ENCODE measurements at regions of chr3 and their contacts with region 1.

Region 1: GRCh38 chr3:52231502-52232293 is 6.3 kb upstream of the TLR9 start:
- DNase-seq: peak; percentile 79 to 97 (median 89)
- ATAC-seq: peak; percentile 87
- H3K4me3 ChIP-seq: no peak overlapping the region
- H3K4me3 Mint-ChIP-seq: peak overlapping the region; percentile 42
- H3K27ac ChIP-seq: peak overlapping the region in 1 of 2 experiments; percentile 17
- H3K27ac Mint-ChIP-seq: peak overlapping the region; percentile 90
- H3K4me1 ChIP-seq: peaks cover 61% of the 10 kb centered on the region
- H3K4me1 Mint-ChIP-seq: peaks cover 64% of the 10 kb centered on the region
- H3K27me3 ChIP-seq: no peaks in the 10 kb centered on the region
- H3K27me3 Mint-ChIP-seq: no peaks in the 10 kb centered on the region
- CTCF ChIP-seq: peak; percentile 92

Region 2: DNA sequence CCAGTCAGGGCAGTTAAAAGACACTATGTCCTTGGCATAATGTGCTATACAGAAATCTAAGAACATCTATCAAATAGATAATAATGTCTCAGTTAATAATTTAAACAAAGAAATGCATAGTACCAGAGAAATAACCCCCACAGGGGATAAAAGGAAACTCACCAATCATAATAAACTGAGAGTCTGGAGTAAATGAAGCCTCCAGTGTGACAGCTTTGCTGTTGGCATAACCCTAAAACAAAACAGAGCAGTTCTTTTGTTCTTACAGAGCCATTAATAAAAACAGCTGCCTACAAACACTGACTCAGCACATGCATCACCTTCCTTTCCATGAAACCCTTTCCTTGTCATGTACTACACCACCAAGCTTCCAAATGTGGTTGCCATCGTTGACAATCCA is 27.3 kb after region 1 on chr3:
- CTCF ChIA-PET with region 1: interaction called, 54 read pairs
- POLR2A ChIA-PET with region 1: interaction called, 160 read pairs
- intact Hi-C with region 1: no loop called
- DNase-seq: no peak
- ATAC-seq: no peak
- H3K4me3 ChIP-seq: no peak overlapping the region
- H3K4me3 Mint-ChIP-seq: no peak overlapping the region
- H3K27ac ChIP-seq: peak overlapping the region in 1 of 2 experiments; percentile 6
- H3K27ac Mint-ChIP-seq: peak overlapping the region; percentile 100
- H3K4me1 ChIP-seq: peaks cover 91% of the 10 kb centered on the region
- H3K4me1 Mint-ChIP-seq: peaks cover 94% of the 10 kb centered on the region
- H3K27me3 ChIP-seq: no peaks in the 10 kb centered on the region
- H3K27me3 Mint-ChIP-seq: no peaks in the 10 kb centered on the region
- CTCF ChIP-seq: no peak

Region 3: GRCh38 chr3:52278510-52279069 is 46.9 kb after region 1 on chr3 and contains the start of gene WDR82:
- CTCF ChIA-PET with region 1: interaction called, 622 read pairs
- POLR2A ChIA-PET with region 1: interaction called, 685 read pairs
- intact Hi-C with region 1: no loop called
- DNase-seq: peak; percentile 94 to 99 (median 98)
- ATAC-seq: peak; percentile 77
- H3K4me3 ChIP-seq: peak within 1 kb of the TSS; percentile 65 to 95
- H3K4me3 Mint-ChIP-seq: peak within 1 kb of the TSS; percentile 94
- H3K27ac ChIP-seq: peak within 1 kb of the TSS; percentile 79 to 93
- H3K27ac Mint-ChIP-seq: peak within 1 kb of the TSS; percentile 99
- H3K4me1 ChIP-seq: peaks cover 49% of the 10 kb centered on the region
- H3K4me1 Mint-ChIP-seq: peaks cover 72% of the 10 kb centered on the region
- H3K27me3 ChIP-seq: no peaks in the 10 kb centered on the region
- H3K27me3 Mint-ChIP-seq: no peaks in the 10 kb centered on the region
- CTCF ChIP-seq: peak; percentile 36
- total RNA-seq, gene WDR82: 115 to 117 TPM

Region 4: DNA sequence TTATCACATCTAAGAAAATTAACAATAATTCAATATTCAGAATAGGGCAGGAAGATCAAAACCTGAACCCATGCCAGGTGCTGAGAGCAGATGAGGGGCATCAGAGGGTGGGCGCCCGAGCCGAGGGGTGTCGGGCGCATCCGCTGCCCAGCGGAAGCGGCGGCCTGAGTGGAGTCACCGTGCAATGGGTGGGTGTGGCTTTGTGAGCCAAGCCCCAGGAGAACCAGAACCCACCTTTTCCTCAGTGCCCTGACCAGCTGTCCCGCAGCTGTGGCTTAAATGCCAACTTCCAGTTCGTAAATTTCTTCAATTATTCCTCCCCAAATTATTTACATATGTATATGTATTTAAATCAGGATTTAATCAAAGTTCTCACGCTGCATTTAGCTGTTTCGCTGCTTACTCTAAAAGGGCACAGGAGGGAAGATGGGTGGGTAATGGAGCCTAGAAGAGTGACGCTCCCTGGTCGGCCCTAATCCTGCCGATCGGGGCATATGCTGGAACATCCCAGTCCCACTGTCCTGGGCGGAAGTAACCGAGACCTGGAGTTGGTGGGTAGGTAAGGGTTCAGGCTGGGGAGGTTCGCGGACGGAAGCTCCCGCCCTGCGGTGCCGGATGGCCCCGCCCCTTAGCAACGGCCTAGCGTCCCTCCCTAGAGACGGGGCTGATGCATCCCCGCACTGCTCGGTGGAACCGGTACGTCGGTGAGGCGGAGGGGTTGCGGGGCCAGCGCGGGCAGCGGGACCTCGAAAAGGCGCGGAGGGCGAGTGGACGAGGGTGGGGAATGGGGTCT is 85.7 kb after region 1 on chr3:
- CTCF ChIA-PET with region 1: interaction called, 16 read pairs
- POLR2A ChIA-PET with region 1: no interaction called
- intact Hi-C with region 1: no loop called
- DNase-seq: peak; percentile 48 to 84 (median 73)
- ATAC-seq: peak; percentile 100
- H3K4me3 ChIP-seq: peak overlapping the region; percentile 36 to 59
- H3K4me3 Mint-ChIP-seq: peak overlapping the region; percentile 69
- H3K27ac ChIP-seq: no peak overlapping the region
- H3K27ac Mint-ChIP-seq: no peak overlapping the region
- H3K4me1 ChIP-seq: peaks cover 12% of the 10 kb centered on the region
- H3K4me1 Mint-ChIP-seq: peaks cover 11% of the 10 kb centered on the region
- H3K27me3 ChIP-seq: no peaks in the 10 kb centered on the region
- H3K27me3 Mint-ChIP-seq: no peaks in the 10 kb centered on the region
- CTCF ChIP-seq: no peak

Region 5: DNA sequence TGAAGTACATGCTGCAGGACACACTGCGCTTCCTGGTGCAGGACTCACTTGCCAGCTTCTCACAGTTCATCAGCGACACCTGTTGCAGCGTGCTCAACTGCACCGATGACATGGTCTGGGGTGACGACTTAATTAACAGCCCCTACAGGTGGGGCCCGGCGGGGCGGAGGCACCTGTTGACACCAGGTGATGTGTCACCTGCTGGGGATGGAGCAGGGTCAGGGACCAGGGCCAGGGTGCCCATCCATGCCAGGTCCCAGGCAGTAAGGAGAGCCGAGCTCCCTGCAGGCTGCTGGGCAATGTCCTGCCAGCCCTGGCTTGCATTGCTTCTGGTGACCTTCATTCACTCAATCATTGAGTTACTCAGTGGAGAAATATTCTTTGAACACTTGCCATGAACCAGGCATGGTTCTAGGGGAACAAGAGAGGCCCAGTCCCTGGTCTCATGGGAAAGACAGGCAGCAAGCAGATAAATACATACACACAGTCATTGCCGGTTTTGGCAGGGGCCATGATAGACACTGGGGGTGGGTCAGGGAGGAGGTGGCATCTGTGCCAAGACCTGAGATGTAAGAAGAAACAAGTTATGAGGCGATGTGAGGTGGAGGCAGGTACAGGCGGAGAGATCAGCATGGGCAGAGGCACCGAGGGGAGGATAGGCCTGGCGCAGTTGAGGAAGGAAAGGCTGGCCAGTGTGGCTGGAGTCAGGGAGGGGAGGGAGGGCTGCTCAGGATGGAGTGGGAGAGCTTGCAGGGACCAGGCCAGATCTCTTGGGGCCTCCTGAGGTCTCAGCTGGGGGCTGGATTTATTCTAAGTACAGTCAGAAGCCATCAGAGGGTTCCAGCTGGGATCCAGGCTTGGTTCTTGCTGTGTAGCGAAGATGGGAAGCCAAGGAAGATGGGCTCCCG is 115.2 kb after region 1 on chr3:
- CTCF ChIA-PET with region 1: interaction called, 241 read pairs
- POLR2A ChIA-PET with region 1: no interaction called
- intact Hi-C with region 1: no loop called
- DNase-seq: no peak
- ATAC-seq: no peak
- H3K4me3 ChIP-seq: no peak overlapping the region
- H3K4me3 Mint-ChIP-seq: no peak overlapping the region
- H3K27ac ChIP-seq: no peak overlapping the region
- H3K27ac Mint-ChIP-seq: no peak overlapping the region
- H3K4me1 ChIP-seq: no peaks in the 10 kb centered on the region
- H3K4me1 Mint-ChIP-seq: no peaks in the 10 kb centered on the region
- H3K27me3 ChIP-seq: no peaks in the 10 kb centered on the region
- H3K27me3 Mint-ChIP-seq: no peaks in the 10 kb centered on the region
- CTCF ChIP-seq: no peak

Region 6: DNA sequence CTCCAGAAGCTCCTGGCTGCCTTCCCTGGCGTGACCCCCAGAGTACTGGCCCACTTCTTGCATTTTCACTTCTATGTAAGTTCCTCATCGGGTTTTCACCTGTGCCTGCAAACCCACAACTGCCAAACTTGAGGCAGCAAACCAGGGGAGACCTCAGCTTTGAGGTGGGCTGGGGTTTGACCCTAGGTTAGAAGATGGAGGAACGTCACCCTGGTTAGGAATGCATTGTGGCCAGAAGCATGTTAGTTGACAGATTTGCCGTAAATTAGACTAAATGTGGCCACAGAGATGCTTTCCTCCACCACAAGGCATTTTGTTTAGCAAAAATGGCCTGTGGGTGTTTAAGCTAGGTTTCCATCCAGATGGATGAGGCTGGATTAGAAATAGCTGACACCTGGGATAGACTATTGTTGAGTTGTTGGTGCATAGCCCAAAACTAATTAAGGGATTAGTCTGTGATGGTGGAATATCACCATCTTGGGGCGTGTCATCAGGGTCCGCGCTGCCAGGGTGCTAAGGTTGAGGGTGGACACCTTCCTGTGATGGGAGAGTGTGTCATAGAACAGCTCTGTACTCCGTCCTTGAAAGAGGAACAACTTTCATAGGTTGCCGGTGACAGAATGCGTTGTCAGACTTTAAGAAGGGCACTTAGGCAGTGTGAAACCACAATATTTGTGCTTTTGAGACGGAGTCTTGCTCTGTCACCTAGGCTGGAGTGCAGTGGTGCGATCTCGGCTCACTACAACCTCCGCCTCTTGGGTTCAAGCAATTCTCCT is 227.3 kb after region 1 on chr3:
- CTCF ChIA-PET with region 1: no interaction called
- POLR2A ChIA-PET with region 1: no interaction called
- intact Hi-C with region 1: no loop called
- DNase-seq: peak in 3 of 9 experiments; percentile 21 to 65 (median 52)
- ATAC-seq: no peak
- H3K4me3 ChIP-seq: no peak overlapping the region
- H3K4me3 Mint-ChIP-seq: no peak overlapping the region
- H3K27ac ChIP-seq: peak overlapping the region in 1 of 2 experiments; percentile 31
- H3K27ac Mint-ChIP-seq: no peak overlapping the region
- H3K4me1 ChIP-seq: peaks cover 26% of the 10 kb centered on the region
- H3K4me1 Mint-ChIP-seq: peaks cover 54% of the 10 kb centered on the region
- H3K27me3 ChIP-seq: no peaks in the 10 kb centered on the region
- H3K27me3 Mint-ChIP-seq: no peaks in the 10 kb centered on the region
- CTCF ChIP-seq: no peak

Measured in CD8-positive, alpha-beta T cell (primary cell).